ENCODE measurements at regions of chr20 and their contacts with region 1.

Region 1: DNA sequence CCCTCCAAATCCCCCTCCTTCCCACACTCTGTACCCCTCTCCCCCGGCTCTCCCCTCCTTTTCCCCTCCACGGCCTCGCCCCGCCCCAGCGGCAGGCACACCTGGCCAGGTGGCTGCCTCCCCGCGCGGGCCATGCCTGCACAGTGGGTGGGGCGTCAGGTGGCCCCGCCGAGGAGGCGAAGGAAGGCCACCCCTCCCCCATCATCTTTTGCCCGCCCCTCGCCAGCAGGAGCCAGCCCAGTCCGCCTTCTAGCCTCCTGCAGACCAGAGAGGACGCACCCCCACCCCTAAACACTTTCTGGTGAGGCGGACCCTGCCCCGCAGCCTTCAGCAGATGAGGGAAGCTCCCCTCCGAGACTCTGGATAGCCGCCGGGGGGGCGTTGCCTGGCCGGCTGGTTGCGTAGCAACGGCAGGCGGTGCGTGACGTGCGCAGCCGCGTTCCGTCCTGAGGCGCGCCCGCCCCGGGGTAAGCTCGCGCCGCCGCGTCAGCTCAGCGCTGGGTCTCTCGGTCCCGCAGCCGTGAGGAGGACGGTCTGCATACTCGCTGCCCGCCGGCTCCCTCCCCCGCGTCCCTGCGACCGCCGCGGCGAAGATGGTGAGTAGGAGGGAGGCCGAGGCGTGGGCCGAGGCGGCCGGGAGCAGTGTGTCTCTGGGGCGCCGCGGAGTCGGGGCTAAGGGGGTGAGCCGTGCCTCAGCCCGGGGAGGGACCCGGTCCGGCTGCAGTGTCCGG is at the start of gene DSTN:
- DNase-seq: peak; percentile 93 to 96
- H3K4me3 ChIP-seq: peak within 1 kb of the TSS; percentile 84 to 93 (median 88)
- H3K27ac ChIP-seq: peak within 1 kb of the TSS; percentile 89
- H3K4me1 ChIP-seq: peaks cover 3 to 26% (median 15%) of the 10 kb centered on the region in 4 experiments; a peak in 6 of 7 replicates
- H3K27me3 ChIP-seq: no peaks in the 10 kb centered on the region
- CTCF ChIP-seq: no peak
- EP300 ChIP-seq: peak in 1 of 2 experiments; percentile 52; a peak in 1 of 3 replicates
- POLR2A ChIP-seq: no peak
- RAD21 ChIP-seq: peak in 1 of 2 experiments; percentile 11; a peak in 1 of 4 replicates
- total RNA-seq, gene DSTN: 208 TPM in 2 replicates

Region 2: DNA sequence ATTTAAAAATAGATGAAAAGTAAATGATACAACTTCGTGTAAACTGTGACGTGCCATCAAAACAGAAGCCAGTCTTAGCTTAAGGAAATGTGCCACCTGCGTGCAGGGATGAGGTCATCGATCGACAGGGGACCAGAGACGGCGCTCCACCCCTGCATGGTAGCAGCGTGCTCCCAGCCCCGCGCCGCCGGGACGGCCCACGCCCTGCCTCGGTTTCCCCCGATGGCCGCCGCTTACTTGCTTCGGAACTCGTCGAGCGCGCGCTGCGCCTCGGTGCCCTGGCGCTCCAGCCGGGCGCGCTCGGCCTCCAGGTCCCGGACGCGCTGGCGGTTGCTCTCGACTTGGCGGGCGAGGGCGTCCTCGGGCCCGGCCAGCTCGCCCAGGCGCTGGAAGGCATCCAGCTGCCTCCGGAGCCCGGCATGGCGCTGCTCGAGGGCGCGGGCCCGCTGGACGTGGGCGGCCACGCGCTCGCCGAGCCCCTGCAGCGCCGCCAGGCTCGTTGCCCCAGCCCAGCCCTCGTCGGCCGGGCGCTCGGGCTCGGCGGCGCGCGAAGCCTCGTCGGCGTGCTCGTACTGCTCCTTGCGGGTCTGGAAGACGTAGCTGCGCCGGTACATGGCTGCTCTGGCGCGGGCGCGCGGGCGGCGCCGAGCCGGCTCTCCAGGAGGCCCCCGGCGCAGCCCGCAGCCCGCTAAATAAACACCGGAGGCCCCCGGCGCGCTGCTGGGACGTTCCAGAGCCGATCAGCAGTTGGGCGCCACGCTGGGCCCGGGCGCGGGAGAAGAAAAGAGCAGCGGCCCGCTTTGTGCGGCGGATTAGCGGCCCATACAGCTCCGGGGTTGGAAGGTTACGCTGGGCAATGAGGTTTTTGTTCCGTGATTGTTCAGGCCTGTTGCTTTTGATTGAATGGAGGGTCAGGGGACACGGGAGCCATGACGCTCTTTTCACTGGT is 38.8 kb before region 1 on chr20 and contains the start of gene BFSP1:
- CTCF ChIA-PET with region 1: interaction called, 4 read pairs
- POLR2A ChIA-PET with region 1: interaction called, 14 read pairs
- DNase-seq: peak; percentile 25 to 82
- H3K4me3 ChIP-seq: peak within 1 kb of the TSS; percentile 46 to 67 (median 52)
- H3K27ac ChIP-seq: peak within 1 kb of the TSS; percentile 63; the same call in 1 of the 2 replicates
- H3K4me1 ChIP-seq: peaks cover 5 to 12% (median 9%) of the 10 kb centered on the region in 4 experiments
- H3K27me3 ChIP-seq: peaks cover 2 to 17% (median 11%) of the 10 kb centered on the region in 4 experiments
- CTCF ChIP-seq: no peak
- EP300 ChIP-seq: no peak
- POLR2A ChIP-seq: peak in 1 of 2 experiments; percentile 47; a peak in 1 of 3 replicates
- RAD21 ChIP-seq: no peak
- total RNA-seq, gene BFSP1: 2.5 and 3.2 TPM in 2 replicates

Region 3: DNA sequence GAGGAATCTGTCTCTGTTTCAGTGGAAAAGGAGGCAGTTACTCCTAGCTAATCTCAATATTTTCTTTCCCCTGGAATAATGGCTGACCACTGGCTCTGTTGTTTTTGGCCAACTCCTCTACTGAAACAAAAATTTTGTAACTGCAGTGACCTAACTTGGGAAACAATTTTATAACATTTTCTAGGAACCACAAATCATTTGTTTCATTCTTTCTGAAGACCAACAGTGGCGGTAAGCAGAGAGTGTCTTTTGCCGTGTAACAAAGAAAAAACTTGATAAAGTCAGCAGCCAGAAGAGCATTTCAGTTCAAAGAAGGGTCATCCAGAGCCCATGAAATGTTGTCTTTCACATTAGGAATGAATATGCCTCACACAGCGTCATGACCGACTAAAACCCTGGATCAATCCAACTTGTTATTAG is 26.8 kb before region 1 on chr20:
- CTCF ChIA-PET with region 1: interaction called, 6 read pairs
- POLR2A ChIA-PET with region 1: interaction called, 18 read pairs
- DNase-seq: no peak
- H3K4me3 ChIP-seq: no peak overlapping the region
- H3K27ac ChIP-seq: no peak overlapping the region
- H3K4me1 ChIP-seq: no peaks in the 10 kb centered on the region
- H3K27me3 ChIP-seq: no peaks in the 10 kb centered on the region
- CTCF ChIP-seq: no peak
- EP300 ChIP-seq: no peak
- POLR2A ChIP-seq: no peak
- RAD21 ChIP-seq: no peak

Region 4: GRCh38 chr20:17589161-17589834 is 19.5 kb after region 1 on chr20:
- CTCF ChIA-PET with region 1: interaction called, 11 read pairs
- POLR2A ChIA-PET with region 1: interaction called, 18 read pairs
- DNase-seq: no peak
- H3K4me3 ChIP-seq: no peak overlapping the region
- H3K27ac ChIP-seq: no peak overlapping the region
- H3K4me1 ChIP-seq: peaks cover 0 to 5% (median under 1%) of the 10 kb centered on the region in 4 experiments; a peak in 2 of 7 replicates
- H3K27me3 ChIP-seq: no peaks in the 10 kb centered on the region
- CTCF ChIP-seq: no peak
- EP300 ChIP-seq: no peak
- POLR2A ChIP-seq: no peak
- RAD21 ChIP-seq: no peak

Region 5: DNA sequence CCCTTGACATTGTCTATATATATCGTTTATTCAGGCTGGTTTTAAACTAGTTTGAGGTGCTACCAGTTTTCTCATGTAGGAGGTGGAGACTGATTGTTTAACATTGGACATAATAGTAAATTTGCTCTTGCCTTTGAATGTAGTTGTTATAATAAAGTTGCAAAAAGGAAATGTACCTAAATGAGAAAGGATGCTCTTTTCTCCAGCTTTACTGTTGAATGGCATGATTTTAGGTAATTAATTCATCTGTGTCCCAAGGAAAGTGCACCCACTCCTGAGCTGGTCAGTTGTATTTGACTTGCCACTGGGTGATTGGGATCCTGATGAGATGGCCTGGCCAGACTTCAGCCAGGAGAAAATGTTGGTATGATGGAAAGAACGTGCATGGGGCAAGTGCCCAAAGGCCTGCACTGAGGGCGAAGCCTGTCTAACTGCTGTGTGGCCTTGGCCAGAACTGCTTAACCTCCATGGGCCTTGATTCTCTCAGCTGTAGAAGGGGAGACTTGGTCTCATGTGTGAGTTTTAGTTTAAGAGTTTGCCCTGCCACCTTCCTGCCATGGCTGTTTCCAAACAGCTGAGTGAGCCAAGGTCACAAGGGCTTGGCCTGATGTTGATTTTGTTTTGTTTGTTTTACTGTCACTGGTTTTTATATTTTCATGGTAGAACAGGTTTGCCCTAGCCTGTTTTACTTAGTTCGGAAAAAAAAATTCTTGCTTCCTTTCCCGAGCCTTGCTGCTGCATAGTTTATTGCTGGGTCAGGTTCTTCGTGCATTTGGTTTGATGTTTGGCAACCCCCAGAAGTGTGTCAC is 35.3 kb after region 1 on chr20:
- CTCF ChIA-PET with region 1: interaction called, 15 read pairs
- POLR2A ChIA-PET with region 1: interaction called, 23 read pairs
- DNase-seq: no peak
- H3K4me3 ChIP-seq: no peak overlapping the region
- H3K27ac ChIP-seq: no peak overlapping the region
- H3K4me1 ChIP-seq: peaks cover 0 to 11% (median 5%) of the 10 kb centered on the region in 4 experiments; a peak in 6 of 7 replicates
- H3K27me3 ChIP-seq: no peaks in the 10 kb centered on the region
- CTCF ChIP-seq: no peak
- EP300 ChIP-seq: no peak
- POLR2A ChIP-seq: no peak
- RAD21 ChIP-seq: no peak

Measured in H1 (cell line).